ENCODE measurements at regions of chr12 and their contacts with region 1.

Region 1: DNA sequence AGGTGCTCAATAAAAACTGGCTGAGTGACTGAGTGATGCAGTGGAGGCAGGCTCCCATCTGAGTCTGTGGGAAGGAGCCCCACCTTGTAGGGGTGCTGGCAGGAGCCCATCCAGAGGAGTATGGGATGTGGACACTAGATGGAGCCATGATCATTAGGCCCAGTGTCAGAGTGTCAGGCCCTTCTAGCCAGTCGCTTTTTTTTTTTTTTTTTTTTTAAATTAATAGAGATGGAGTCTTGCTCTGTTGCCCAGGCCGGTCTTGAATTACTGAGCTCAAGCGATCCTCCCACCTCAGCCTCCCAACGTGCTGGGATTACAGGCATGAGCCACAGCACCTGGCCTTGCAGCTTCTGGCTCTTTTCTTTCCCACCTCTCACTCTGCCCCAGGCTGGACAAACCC is 11.5 kb downstream of the RITA1 start:
- DNase-seq: peak; percentile 78 to 87
- H3K4me3 ChIP-seq: no peak overlapping the region
- H3K27ac ChIP-seq: peak overlapping the region in 1 of 2 donors; percentile 67
- H3K4me1 ChIP-seq: peaks cover 0 to 31% (median 15%) of the 10 kb centered on the region in 4 donors
- H3K27me3 ChIP-seq: no peaks in the 10 kb centered on the region
- CTCF ChIP-seq: peak; percentile 55 to 58

Region 2: DNA sequence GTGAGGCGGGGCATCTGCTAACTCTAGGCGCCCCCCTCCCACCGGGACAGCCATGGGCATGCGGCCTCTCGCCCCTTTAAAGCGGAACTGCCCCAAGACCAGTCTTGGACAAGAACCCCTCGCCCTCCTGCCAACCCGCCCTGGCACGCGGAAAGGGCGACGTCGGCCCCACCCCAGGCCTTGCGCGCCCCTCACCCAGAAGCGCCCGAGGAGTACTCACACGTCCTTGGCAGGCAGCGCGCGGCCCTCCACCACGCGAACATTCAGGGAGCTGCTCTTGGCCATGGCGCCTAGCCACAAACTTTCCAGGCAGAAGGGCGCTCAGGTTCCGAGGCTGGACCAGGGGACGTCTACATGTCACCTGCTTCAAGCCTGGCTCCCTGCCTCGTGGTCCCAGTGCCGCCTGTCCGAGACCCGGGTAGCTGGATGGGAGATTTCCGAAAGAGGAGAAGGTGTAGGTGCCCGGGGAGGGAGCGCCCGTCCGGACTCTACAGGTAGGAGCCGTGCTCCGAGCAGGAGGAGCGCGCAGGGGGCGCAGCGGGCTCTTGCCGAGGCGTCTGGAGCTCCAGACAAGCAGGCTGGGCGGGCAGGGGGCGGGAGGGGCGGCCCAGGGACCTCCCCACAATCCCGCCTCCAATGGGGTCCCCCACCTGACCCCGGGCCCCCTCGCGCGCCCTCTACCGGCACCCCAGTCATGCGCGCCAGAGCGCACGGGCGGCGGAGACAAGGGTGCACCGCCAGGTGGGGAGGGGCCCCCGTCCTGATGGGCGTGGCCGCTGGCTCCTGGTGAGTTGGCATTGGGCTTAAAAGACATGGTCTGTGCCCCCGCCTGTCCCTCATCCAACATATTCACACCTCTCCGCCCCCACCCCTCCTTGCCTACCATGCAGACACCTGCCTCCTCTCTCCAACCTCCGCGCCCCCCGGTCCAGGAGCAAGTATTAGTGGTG is 61.5 kb before region 1 on chr12 and contains the start of gene RASAL1:
- intact Hi-C with region 1: no loop called
- DNase-seq: no peak
- H3K4me3 ChIP-seq: no peak within 1 kb of the TSS
- H3K27ac ChIP-seq: no peak within 1 kb of the TSS
- H3K4me1 ChIP-seq: peaks cover 0 to 14% (median 0%) of the 10 kb centered on the region in 4 donors
- H3K27me3 ChIP-seq: peaks cover 0 to 64% of the 10 kb centered on the region in 2 donors
- CTCF ChIP-seq: no peak

Region 3: DNA sequence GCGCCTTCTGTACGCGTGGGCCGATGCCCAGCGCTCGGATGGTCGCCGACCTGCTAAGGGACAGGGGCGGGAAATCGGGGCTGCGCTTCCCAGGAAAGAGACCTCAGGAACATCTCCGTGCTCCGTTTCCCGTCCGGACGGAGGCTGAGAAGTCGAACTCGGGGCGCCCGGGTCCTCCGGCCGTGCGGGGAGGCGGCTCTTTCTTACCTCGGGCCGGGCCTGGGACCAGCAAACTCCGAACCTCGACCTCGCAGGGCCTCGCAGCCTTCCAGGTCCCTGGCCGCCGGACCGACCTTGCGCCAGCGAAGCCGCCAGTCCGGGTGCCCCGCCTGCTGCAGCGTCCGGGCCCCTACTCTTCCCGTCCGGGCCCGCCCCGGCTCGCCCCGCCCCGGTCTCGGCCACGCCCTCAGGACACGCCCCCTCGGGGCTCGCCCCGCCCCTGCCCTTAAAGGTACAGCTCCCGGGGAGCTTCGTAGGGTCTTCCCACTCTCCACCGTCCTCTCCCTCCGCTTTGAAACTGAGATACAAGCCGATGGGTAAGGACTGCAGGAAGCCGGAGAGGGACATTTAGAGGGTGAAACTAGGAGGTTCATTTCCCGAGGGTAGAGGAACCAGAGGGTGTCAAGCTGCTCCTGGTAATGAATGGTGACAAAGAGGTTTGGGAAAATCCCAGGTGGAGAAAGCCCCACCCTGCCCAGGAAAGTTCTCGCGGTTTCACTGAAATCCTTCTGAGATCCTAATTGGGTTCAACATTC is 138.0 kb after region 1 on chr12 and contains the start of gene SLC8B1:
- intact Hi-C with region 1: loop called (anchors 10 kb)
- DNase-seq: peak; percentile 85 to 93
- H3K4me3 ChIP-seq: peak within 1 kb of the TSS; percentile 65 to 81
- H3K27ac ChIP-seq: peak within 1 kb of the TSS; percentile 74 to 77
- H3K4me1 ChIP-seq: peaks cover 0 to 28% (median 23%) of the 10 kb centered on the region in 4 donors
- H3K27me3 ChIP-seq: no peaks in the 10 kb centered on the region
- CTCF ChIP-seq: no peak

Region 4: GRCh38 chr12:113358381-113359132 is 161.6 kb after region 1 on chr12 and contains the start of gene PLBD2:
- intact Hi-C with region 1: loop called (anchors 5 kb)
- DNase-seq: peak; percentile 93 to 96
- H3K4me3 ChIP-seq: peak within 1 kb of the TSS; percentile 68 to 78
- H3K27ac ChIP-seq: peak within 1 kb of the TSS; percentile 85 to 86
- H3K4me1 ChIP-seq: peaks cover 0 to 20% (median 14%) of the 10 kb centered on the region in 4 donors
- H3K27me3 ChIP-seq: no peaks in the 10 kb centered on the region
- CTCF ChIP-seq: peak in 1 of 2 experiments; percentile 9

Region 5: DNA sequence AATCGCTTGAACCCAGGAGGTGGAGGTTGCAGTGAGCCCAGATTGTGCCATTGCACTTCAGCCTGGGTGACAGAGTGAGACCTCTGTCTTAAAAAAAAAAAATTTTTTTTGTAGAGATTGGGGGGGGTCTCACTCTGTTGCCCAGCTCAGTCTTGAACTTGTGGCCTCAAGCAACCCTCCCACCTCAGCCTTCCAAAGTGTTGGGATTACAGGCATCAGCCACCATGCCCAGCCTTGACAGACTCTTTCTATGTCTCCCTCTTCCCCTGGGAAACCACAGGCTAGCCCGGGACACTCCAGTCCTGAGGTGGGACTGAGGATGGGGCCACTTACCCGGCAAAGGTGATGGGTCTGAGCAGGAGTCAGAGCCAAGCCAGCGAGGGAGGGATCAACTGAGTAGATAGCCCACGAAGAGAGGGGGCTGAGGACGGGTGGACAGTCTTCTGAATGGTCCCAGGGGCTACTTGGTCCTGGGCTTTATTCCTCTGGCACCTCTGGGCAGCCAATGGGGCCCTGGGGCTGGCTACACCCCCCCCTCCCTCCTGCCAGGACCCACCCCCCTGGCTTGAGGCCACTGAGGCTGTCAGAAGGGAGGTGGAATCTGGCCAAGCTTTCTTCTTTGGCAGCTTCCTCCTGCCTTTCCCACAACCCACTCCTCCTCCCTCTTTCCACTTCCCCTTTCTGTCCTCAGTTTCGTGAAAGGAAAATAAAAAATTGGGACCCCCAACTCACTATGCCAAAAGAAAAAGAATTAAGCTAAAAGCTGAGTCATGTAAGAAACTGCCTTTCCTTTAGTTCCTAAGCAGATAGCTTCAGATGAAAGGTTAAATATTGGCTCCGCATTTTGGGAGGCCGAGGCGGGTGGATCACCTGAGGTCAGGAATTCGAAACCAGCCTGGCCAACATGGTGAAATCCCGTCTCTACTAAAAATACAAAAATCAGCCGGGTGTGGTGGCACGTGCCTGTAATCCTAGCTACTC is 206.7 kb after region 1 on chr12 and contains the start of gene SDS:
- intact Hi-C with region 1: no loop called
- DNase-seq: peak; percentile 42 to 73
- H3K4me3 ChIP-seq: no peak within 1 kb of the TSS
- H3K27ac ChIP-seq: no peak within 1 kb of the TSS
- H3K4me1 ChIP-seq: peaks cover 0 to 3% (median 0%) of the 10 kb centered on the region in 4 donors
- H3K27me3 ChIP-seq: peaks cover 0 to 28% of the 10 kb centered on the region in 2 donors
- CTCF ChIP-seq: no peak

Measured in tibial artery (tissue), 4 donors.